Upper lobe of right lung (tissue), 1 donor: ENCODE measurements at regions of chr4 and their contacts with region 1.

Region 1: GRCh38 chr4:112327965-112328733 is 31.0 kb downstream of the ALPK1 start:
- DNase-seq: no peak
- ATAC-seq: no peak
- H3K4me3 ChIP-seq: no peak overlapping the region
- H3K27ac ChIP-seq: no peak overlapping the region
- H3K4me1 ChIP-seq: no peaks in the 10 kb centered on the region
- H3K27me3 ChIP-seq: no peaks in the 10 kb centered on the region
- CTCF ChIP-seq: peak; percentile 44

Region 2: DNA sequence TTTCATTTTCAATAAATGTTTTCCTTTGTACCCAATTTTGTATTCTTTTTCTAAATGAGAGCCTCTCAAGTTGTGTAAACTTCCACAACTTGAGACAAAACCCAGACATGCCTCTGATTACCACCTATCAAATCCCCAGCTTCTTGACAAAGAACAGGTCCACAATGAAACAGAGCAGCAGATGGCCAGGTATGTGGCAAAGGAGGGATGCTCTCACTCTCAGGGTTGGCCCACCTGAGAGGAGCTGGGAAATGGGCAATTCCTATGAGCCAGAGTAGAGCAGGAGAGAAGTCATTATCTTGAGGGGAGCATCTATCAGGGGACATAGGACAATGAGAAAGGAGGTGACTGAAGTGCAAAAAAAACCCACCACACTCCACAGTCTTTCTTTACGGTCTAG is 456.3 kb before region 1 on chr4:
- intact Hi-C with region 1: no loop called
- DNase-seq: no peak
- ATAC-seq: no peak
- H3K4me3 ChIP-seq: no peak overlapping the region
- H3K27ac ChIP-seq: no peak overlapping the region
- H3K4me1 ChIP-seq: no peaks in the 10 kb centered on the region
- H3K27me3 ChIP-seq: no peaks in the 10 kb centered on the region
- CTCF ChIP-seq: no peak

Region 3: GRCh38 chr4:112523764-112524505 is 195.8 kb after region 1 on chr4:
- intact Hi-C with region 1: loop called (anchors 10 kb)
- DNase-seq: peak; percentile 84
- ATAC-seq: peak; percentile 95
- H3K4me3 ChIP-seq: peak overlapping the region; percentile 34
- H3K27ac ChIP-seq: no peak overlapping the region
- H3K4me1 ChIP-seq: peaks cover 14% of the 10 kb centered on the region
- H3K27me3 ChIP-seq: peaks cover 68% of the 10 kb centered on the region
- CTCF ChIP-seq: peak; percentile 74